ENCODE measurements at regions of chr14 and their contacts with region 1.

Region 1: DNA sequence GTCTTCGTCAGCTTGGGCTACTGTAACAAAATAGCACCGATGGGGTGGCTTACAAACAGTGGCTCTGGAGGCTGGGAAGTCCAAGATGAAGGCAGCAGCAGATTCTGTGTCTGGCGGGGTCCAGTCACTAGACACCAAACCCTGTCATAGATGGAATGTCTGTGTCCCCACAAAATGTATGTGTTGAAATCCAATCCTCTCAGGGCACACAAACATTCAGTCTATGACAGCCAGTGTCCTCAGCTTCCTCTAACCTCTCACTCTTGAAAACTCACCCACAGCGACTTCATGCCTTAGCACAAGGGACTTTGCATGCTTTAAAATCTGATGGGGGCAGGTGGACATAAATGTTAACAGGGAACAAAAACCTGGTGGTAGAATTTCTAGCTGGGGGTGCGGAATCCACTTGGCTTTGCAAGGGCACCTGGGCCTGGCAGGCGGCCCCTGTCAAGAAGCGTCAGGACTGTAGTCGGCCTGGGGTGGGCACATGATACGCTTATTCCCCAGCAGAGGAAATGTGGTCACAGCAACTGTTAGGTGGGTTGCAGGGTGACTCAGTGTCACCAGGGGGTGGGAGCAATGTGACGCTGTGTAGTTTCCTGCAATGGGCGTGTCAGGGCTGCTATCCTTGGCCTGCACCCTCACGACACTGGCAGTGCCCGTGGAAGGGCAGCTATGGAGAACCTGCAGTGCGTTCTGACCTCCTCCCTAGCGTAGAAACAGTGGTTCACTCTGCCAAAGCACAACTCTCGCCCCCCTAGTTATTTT is 17.7 kb downstream of the RIN3 start:
- DNase-seq: peak; percentile 62
- H3K4me3 Mint-ChIP-seq: peak overlapping the region; percentile 25
- H3K27ac Mint-ChIP-seq: peak overlapping the region; percentile 85
- H3K4me1 Mint-ChIP-seq: peaks cover 68% of the 10 kb centered on the region
- H3K27me3 Mint-ChIP-seq: peaks cover 3% of the 10 kb centered on the region

Region 2: DNA sequence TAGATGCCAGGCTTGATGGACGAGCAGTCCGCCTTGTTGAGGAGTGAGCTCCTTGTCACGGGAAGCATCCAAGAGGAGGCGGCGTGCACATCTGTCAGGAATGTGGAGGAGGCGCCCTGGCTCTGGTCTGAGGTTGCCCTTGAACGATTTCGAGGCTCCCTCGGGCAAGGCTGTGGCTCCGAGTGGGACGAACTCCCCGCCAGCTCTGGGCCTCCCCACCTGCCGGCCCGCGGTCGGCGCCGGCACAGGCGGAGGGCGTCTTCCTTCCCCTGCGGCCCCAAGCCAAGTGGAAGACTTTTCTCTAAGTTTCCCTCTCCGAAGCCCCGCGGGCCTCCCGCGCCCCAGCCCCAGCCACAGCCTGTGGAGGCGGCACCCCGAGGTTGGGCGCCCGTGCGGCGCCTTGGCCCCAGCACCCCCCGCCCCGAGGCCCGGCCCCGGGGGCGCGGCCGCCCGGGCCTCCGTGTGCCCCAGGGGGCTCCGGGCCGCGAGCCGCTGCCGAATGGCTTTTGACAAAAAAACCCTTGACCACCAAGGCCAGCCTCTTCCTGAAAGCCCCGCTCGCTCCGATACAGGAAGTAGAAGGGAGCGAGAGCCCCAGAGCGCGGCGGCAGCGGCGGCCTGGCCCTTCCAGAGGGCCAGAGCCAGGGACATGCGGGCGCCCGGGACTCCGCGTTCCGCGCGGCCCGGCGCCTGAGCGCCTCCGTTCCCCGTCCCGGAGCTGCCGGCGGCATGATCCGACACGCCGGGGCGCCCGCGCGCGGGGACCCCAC is 17.9 kb before region 1 on chr14 and contains the start of gene RIN3:
- CTCF ChIA-PET with region 1: interaction called, 3 read pairs
- intact Hi-C with region 1: loop called (anchors 2 kb)
- DNase-seq: peak; percentile 61
- H3K4me3 Mint-ChIP-seq: peak within 1 kb of the TSS; percentile 68
- H3K27ac Mint-ChIP-seq: peak within 1 kb of the TSS; percentile 26
- H3K4me1 Mint-ChIP-seq: peaks cover 19% of the 10 kb centered on the region
- H3K27me3 Mint-ChIP-seq: no peaks in the 10 kb centered on the region
- total RNA-seq, gene RIN3: 15.8 to 16.0 TPM

Region 3: DNA sequence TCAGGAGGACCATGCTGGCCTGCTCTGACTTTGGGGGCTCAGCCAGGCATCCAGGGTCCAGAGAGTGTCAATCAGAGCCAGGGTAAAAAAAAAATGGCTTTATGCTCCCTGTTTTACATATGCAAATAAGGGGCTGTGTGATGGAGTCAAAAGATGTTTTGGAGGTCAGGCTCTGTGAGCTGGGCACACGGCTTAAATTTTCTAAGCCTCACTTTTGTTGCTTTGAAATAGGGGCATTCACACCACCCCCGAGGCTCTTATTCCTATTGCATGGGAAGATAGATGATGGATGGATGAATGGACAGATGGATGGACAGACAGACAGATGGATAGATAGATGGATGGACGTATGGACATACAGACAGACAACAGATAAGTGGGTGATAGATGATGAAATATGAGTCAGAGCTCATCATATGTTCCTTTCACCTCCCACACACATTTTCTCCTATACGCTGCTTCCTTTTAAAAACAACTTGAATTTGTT is 25.0 kb after region 1 on chr14:
- CTCF ChIA-PET with region 1: no interaction called
- intact Hi-C with region 1: loop called (anchors 2 kb)
- DNase-seq: peak; percentile 27
- H3K4me3 Mint-ChIP-seq: no peak overlapping the region
- H3K27ac Mint-ChIP-seq: no peak overlapping the region
- H3K4me1 Mint-ChIP-seq: peaks cover 60% of the 10 kb centered on the region
- H3K27me3 Mint-ChIP-seq: no peaks in the 10 kb centered on the region

Region 4: GRCh38 chr14:92625213-92625612 is 93.9 kb after region 1 on chr14:
- CTCF ChIA-PET with region 1: no interaction called
- intact Hi-C with region 1: no loop called
- DNase-seq: no peak
- H3K4me3 Mint-ChIP-seq: no peak overlapping the region
- H3K27ac Mint-ChIP-seq: no peak overlapping the region
- H3K4me1 Mint-ChIP-seq: no peaks in the 10 kb centered on the region
- H3K27me3 Mint-ChIP-seq: no peaks in the 10 kb centered on the region